Aorta (tissue), 5 donors: ENCODE measurements at regions of chr17 and their contacts with region 1.

Region 1: GRCh38 chr17:39231591-39232551 is 6.1 kb upstream of the STAC2 start:
- DNase-seq: peak; percentile 80 to 89
- ATAC-seq: peak; percentile 85
- H3K4me3 ChIP-seq: no peak overlapping the region
- H3K27ac ChIP-seq: no peak overlapping the region
- H3K4me1 ChIP-seq: no peaks in the 10 kb centered on the region
- H3K27me3 ChIP-seq: no peaks in the 10 kb centered on the region

Region 2: GRCh38 chr17:39026980-39027451 is 204.9 kb before region 1 on chr17:
- intact Hi-C with region 1: no loop called
- DNase-seq: peak; percentile 68 to 88
- ATAC-seq: peak; percentile 80
- H3K4me3 ChIP-seq: peak overlapping the region; percentile 44 to 47
- H3K27ac ChIP-seq: no peak overlapping the region
- H3K4me1 ChIP-seq: no peaks in the 10 kb centered on the region
- H3K27me3 ChIP-seq: no peaks in the 10 kb centered on the region

Region 3: DNA sequence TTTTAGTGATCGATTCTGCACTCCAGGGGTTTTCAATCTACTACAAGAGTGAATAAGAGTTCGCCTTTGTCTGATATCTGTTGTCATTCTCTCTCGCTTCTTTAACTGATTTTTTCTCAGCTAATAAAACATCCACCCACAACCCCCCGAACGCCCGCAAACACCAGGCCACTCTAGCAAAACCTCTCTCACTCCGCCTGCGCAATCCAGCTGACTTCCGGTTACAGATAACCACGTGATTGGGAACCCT is 32.1 kb before region 1 on chr17:
- intact Hi-C with region 1: loop called in 1 of 2 experiments (anchors 5 kb)
- DNase-seq: peak; percentile 93 to 95
- ATAC-seq: peak; percentile 89
- H3K4me3 ChIP-seq: peak overlapping the region in 1 of 2 donors; percentile 39
- H3K27ac ChIP-seq: peak overlapping the region; percentile 30 to 58
- H3K4me1 ChIP-seq: peaks cover 0 to 3% of the 10 kb centered on the region in 2 donors
- H3K27me3 ChIP-seq: no peaks in the 10 kb centered on the region

Region 4: GRCh38 chr17:39209317-39210092 is 22.4 kb before region 1 on chr17:
- intact Hi-C with region 1: loop called (anchors 1 to 2 kb)
- DNase-seq: peak; percentile 94 to 97
- ATAC-seq: peak; percentile 90
- H3K4me3 ChIP-seq: no peak overlapping the region
- H3K27ac ChIP-seq: peak overlapping the region in 1 of 2 donors; percentile 34
- H3K4me1 ChIP-seq: no peaks in the 10 kb centered on the region
- H3K27me3 ChIP-seq: no peaks in the 10 kb centered on the region